ENCODE measurements at regions of chr10 and their contacts with region 1.

Region 1: GRCh38 chr10:15097011-15097812 is at the start of gene RPP38:
- DNase-seq: peak; percentile 95 to 99 (median 98)

Region 2: GRCh38 chr10:14259696-14260566 is 837.3 kb before region 1 on chr10:
- intact Hi-C with region 1: no loop called
- DNase-seq: no peak

Region 3: GRCh38 chr10:14698111-14698828 is 398.9 kb before region 1 on chr10:
- intact Hi-C with region 1: no loop called
- DNase-seq: no peak

Region 4: GRCh38 chr10:14878266-14879054 is 218.8 kb before region 1 on chr10 and contains the start of gene SUV39H2:
- intact Hi-C with region 1: loop called (anchors 2 kb)
- DNase-seq: peak; percentile 86 to 98 (median 96)

Region 5: DNA sequence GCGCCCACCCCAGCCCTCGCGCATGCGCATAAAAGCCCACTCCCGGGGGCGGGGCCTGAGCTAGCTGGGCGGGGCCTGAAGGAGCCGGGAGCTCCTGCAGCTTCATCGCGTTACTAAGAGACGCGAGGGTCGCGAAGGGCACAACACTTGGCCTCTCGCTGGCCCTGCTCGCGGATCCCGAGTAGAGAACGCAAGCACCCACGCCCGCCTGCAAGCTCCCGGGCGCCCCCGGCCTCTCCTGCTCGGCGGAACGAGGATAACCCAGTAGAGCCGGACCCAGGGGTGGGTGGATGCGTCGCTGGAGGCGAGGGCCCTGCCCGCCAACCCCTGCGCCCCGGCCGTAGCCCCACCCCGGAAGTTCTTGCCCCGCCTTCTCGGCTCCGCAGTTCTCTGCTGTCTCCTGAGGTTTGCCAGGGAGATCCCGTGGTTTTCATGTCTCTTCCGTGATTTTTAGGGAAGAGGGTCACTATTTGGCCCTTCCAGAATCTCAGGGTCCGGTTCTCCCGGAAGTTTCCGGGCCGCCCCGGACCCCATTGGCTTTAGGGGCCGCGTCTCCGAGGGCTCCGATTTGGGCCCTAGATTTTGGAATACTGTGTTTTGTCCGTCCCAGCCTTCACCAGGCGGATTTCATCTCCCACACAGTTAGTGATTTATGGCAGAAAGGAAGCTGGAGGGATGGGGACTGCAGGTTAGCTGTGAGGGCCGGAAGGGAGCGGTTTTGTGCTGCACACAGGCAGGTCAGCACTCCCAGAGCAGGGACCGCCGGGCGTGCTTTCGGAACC is 137.7 kb before region 1 on chr10 and contains the start of gene MEIG1:
- intact Hi-C with region 1: loop called (anchors 2 kb)
- DNase-seq: peak; percentile 90 to 99 (median 96)

Region 6: GRCh38 chr10:15027741-15028140 is 69.5 kb before region 1 on chr10:
- intact Hi-C with region 1: no loop called
- DNase-seq: no peak

Region 7: GRCh38 chr10:15168781-15169554 is 71.8 kb after region 1 on chr10:
- intact Hi-C with region 1: loop called (anchors 5 kb)
- DNase-seq: peak; percentile 87 to 100 (median 98)

Region 8: GRCh38 chr10:15370856-15371701 is 273.9 kb after region 1 on chr10 and contains the start of gene FAM171A1:
- intact Hi-C with region 1: loop called (anchors 10 kb)
- DNase-seq: peak in 39 of 42 donors; percentile 50 to 90 (median 76)

Measured in head of caudate nucleus (tissue), 42 donors.